KBM-7 (cell line): ENCODE measurements at regions of chr3 and their contacts with region 1.

Region 1: GRCh38 chr3:56702490-56703315 is 19.6 kb upstream of the TASOR start:
- DNase-seq: peak; percentile 66

Region 2: DNA sequence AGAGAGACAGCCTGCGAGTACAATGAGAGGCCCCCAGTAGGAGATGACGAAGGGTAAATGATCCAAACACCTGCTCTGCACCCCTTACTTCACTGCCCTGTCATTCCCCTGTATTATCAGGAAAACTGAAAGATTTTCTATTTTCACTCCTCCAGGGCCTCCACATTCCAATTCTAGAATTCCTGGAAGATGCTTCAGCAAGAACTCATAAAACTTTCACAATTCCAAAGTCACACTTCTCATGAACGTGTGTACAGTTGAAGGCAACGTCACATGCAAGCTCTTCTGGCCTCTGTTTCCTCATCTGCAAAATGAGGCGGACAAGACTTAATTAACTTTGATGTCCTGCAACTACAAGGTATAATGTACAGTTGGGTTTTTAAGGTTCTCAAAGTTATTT is 295.0 kb after region 1 on chr3:
- in situ Hi-C with region 1: loop called (anchors 10 kb)
- DNase-seq: no peak